H1 (cell line): ENCODE measurements at regions of chr15 and their contacts with region 1.

Region 1: DNA sequence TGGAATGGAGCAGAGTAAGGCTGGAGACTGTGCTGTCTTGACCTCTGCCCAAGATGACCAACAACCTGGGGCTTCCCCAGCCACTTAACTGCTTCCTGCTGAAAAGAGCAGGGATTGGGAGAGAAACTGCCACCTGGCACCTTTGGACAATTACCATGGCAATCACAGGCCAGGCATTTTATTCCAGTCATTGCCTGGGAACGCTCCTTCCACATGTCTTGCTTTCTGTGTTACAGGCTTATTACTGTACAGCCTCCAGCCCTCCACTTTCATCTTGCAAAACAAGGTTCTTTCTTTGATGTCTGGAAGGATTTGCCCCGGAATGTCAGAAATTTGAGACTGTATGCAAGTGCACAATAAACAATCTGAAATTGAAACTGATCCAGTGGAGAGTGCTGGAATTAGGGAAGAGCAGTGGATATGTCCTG is 2.8 kb downstream of the PPP1R14D start:
- DNase-seq: no peak
- H3K4me3 ChIP-seq: no peak overlapping the region
- H3K27ac ChIP-seq: no peak overlapping the region
- H3K4me1 ChIP-seq: no peaks in the 10 kb centered on the region
- H3K27me3 ChIP-seq: no peaks in the 10 kb centered on the region
- CTCF ChIP-seq: no peak
- EP300 ChIP-seq: no peak
- POLR2A ChIP-seq: no peak
- RAD21 ChIP-seq: no peak

Region 2: DNA sequence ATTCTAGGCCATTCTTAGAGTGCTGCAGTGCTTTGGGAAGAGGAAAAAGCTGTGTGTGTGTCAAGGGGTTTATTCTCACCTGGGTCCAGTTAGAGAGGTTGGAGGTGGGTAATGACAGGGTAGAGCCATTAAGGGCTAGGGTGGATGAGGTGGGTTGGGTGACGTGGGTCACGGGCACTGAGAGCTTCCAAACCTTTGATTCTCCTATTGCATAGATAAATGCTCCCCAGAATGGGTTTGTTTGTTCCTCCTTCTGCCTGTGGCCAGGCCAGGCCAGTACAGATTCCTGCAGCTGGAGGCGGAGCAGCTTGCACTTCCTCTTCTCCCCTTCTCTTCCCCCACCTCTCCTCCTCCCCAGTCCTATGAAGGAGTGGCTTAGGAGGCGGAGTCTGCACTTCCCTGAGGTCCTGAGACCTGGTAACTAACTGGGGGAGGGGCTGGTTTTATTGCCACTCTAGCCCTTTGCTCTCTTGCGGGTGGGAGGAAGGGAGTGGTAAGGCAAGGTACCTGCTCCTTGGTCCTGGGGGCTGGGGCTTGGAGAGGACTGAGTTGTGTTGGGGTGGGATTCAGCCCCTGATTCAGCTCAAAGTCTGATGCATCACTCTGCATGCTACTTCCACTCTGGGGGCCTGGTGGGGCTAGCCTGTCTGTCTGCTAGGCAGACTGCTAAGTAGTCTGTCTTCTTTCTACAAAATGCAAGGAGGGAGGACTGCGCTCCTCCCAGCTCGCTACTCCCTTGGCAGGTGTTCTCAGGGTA is 21.7 kb after region 1 on chr15:
- CTCF ChIA-PET with region 1: interaction called, 3 read pairs
- POLR2A ChIA-PET with region 1: interaction called, 10 read pairs
- DNase-seq: no peak
- H3K4me3 ChIP-seq: peak overlapping the region in 1 of 4 experiments; percentile 84; a peak in 2 of 8 replicates
- H3K27ac ChIP-seq: no peak overlapping the region
- H3K4me1 ChIP-seq: peaks cover 0 to 26% (median 15%) of the 10 kb centered on the region in 4 experiments; a peak in 6 of 7 replicates
- H3K27me3 ChIP-seq: peaks cover 0 to 2% (median 0%) of the 10 kb centered on the region in 4 experiments; a peak in 1 of 7 replicates
- CTCF ChIP-seq: no peak
- EP300 ChIP-seq: no peak
- POLR2A ChIP-seq: no peak
- RAD21 ChIP-seq: no peak